Naive thymus-derived CD8-positive, alpha-beta T cell (primary cell): ENCODE measurements at regions of chr14 and their contacts with region 1.

Region 1: GRCh38 chr14:24080888-24081738 is 9.8 kb downstream of the CPNE6 start:
- DNase-seq: peak; percentile 45 to 84 (median 66)
- ATAC-seq: peak; percentile 90
- H3K4me3 Mint-ChIP-seq: peak overlapping the region; percentile 84 to 94 (median 87)
- H3K27ac Mint-ChIP-seq: peak overlapping the region; percentile 67 to 95 (median 90)
- H3K4me1 Mint-ChIP-seq: peaks cover 13 to 28% (median 22%) of the 10 kb centered on the region in 4 donors
- H3K27me3 Mint-ChIP-seq: no peaks in the 10 kb centered on the region

Region 2: DNA sequence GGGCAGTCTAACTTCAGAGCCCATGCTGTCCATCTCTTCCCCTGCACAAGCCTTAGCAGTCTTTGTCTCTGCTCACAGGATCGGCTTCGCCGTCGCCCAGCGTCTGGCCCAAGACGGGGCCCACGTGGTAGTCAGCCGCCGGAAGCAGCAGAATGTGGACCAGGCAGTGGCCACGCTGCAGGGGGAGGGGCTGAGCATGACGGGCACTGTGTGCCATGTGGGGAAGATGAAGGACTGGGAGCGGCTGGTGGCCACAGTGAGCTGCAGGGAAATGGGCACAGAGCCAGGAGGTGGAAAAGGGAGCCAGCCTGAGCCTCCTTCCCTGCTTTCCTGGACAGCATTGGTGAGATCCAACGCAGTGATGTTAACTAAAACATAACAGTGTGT is 43.5 kb before region 1 on chr14:
- POLR2A ChIA-PET with region 1: no interaction called
- DNase-seq: no peak
- ATAC-seq: no peak
- H3K4me3 Mint-ChIP-seq: peak overlapping the region in 1 of 10 donors; percentile 15
- H3K27ac Mint-ChIP-seq: no peak overlapping the region
- H3K4me1 Mint-ChIP-seq: peaks cover 7 to 17% (median 11%) of the 10 kb centered on the region in 4 donors
- H3K27me3 Mint-ChIP-seq: no peaks in the 10 kb centered on the region

Region 3: DNA sequence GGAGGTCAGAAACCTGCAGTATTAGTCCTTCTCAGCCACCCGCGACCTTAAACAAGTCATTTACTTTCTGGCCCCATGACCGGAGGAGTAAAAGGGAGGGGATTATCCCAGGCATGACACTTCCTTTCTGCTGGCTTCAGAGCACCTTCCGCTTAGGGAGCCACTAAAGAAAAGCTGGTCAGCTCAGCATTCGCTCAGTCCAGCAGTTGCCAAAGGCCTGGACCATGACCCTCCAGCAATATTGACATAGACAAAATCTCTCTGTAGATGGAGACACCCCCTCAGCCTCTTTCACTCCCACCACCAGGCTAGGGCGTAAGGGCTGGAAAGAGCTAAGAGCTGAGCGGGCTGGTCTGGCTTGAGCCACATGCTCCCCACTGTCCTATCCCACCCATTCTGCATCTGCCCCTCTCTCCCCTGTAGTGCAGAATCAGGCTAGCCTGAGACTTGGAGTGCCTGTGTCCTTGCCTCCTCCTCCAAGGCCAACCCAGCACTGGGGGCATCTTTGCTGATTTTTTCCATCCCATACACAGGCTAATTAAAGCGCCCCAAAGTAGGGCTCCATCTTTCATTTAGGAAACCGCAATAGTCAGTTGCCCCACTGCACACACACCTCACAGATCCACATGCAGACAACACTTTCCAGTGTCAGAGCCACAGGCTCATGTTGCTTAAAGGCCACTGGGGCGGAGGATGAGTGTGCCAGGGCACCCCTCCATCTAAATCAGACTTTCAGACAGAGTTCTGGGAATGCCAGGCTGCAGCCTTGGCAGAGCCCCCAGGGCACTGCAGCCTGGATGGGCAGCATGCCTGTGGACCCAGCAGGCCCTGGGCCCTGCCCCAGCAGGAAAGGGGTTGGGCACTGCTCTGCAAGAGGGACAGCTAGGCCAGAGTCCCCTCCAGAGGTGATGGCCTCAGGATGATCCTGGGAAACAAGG is 13.7 kb before region 1 on chr14:
- POLR2A ChIA-PET with region 1: interaction called, 16 read pairs
- DNase-seq: no peak
- ATAC-seq: no peak
- H3K4me3 Mint-ChIP-seq: no peak overlapping the region
- H3K27ac Mint-ChIP-seq: peak overlapping the region in 2 of 10 donors; percentile 7 to 37
- H3K4me1 Mint-ChIP-seq: peaks cover 0 to 1% (median 0%) of the 10 kb centered on the region in 4 donors
- H3K27me3 Mint-ChIP-seq: peaks cover 0 to 10% (median 4%) of the 10 kb centered on the region in 5 donors

Region 4: GRCh38 chr14:24100197-24100981 is 19.3 kb after region 1 on chr14:
- POLR2A ChIA-PET with region 1: interaction called, 50 read pairs
- DNase-seq: no peak
- ATAC-seq: no peak
- H3K4me3 Mint-ChIP-seq: no peak overlapping the region
- H3K27ac Mint-ChIP-seq: no peak overlapping the region
- H3K4me1 Mint-ChIP-seq: peaks cover 10 to 19% (median 15%) of the 10 kb centered on the region in 4 donors
- H3K27me3 Mint-ChIP-seq: no peaks in the 10 kb centered on the region

Region 5: DNA sequence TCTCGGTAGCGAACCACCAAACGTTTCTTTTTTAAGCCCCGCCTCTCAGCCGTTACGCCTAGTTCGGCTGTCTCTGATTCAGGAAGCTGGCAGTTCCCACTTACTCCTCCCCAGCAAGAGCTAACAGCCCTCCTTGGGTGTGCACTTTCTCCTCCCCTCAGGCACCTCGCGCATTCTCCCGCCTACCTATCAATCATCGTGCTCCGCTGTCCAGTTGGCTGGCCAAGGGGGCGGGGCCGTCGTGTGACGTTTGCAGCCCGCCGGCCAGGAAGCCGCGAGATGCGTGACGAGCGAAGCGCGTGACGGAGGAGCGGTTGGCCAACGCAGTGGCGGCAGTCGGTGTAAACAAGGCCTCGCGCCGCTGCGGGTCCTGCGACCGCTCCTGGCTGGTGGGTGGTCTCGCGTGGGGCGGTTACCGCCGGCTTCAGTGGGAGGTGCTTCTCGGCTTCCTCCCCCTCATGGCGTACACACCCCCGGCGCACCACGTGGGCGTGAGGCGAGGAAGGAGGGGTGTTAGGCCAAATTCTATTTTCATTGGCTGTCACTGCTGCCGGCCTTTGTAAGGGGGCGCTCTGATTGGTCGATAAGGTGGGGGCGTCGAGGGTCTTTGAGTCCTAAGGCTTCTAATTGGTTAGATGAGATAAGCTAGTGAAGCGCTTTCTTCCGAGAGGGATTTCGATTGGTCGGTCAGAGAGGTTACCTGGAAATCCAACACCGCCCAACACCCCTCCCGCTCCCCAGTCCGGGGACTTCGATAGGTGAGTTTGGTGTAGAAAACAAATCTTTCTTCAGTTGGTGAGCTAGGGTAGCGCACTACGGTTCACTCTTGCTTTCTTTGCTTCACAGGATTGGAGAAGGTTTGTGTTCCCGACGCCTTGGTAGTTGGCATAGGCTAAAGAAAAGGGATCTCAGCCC is 33.7 kb after region 1 on chr14 and contains the starts of genes DCAF11 and NRL:
- POLR2A ChIA-PET with region 1: interaction called, 28 read pairs
- DNase-seq: peak; percentile 96 to 100 (median 99)
- ATAC-seq: peak; percentile 84
- H3K4me3 Mint-ChIP-seq: peak within 1 kb of the TSS; percentile 89 to 99 (median 98)
- H3K27ac Mint-ChIP-seq: peak within 1 kb of the TSS; percentile 95 to 100 (median 99)
- H3K4me1 Mint-ChIP-seq: peaks cover 22 to 39% (median 37%) of the 10 kb centered on the region in 4 donors
- H3K27me3 Mint-ChIP-seq: peaks cover 0 to 4% (median 0%) of the 10 kb centered on the region in 5 donors
- polyA plus RNA-seq, gene DCAF11: 68.0 to 83.8 (median 71.9) TPM
- polyA plus RNA-seq, gene NRL: 3.0 to 3.5 (median 3.1) TPM

Region 6: DNA sequence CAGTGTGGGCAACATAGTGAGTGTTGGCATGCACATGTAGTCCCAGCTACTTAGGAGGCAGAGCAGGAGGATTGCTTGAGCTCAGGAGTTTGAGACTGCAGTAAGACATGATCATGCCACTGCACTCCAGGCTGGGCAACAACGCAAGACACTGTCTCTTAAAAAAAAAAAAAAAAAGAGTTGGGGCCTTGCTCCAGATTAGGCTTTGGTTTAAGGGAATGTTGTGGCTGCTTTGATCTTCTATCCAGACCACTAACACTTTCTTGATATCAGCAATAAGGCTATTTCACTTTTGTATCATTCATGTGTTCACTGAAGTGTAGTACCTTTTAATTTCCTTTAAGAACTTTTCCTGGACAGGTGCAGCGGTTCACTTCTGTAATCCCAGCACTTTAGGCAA is 46.6 kb after region 1 on chr14:
- POLR2A ChIA-PET with region 1: no interaction called
- DNase-seq: no peak
- ATAC-seq: no peak
- H3K4me3 Mint-ChIP-seq: no peak overlapping the region
- H3K27ac Mint-ChIP-seq: peak overlapping the region in 4 of 10 donors; percentile 12 to 62 (median 38)
- H3K4me1 Mint-ChIP-seq: peaks cover 11 to 31% (median 13%) of the 10 kb centered on the region in 4 donors
- H3K27me3 Mint-ChIP-seq: no peaks in the 10 kb centered on the region